ENCODE measurements at regions of chr1 and their contacts with region 1.

Region 1: DNA sequence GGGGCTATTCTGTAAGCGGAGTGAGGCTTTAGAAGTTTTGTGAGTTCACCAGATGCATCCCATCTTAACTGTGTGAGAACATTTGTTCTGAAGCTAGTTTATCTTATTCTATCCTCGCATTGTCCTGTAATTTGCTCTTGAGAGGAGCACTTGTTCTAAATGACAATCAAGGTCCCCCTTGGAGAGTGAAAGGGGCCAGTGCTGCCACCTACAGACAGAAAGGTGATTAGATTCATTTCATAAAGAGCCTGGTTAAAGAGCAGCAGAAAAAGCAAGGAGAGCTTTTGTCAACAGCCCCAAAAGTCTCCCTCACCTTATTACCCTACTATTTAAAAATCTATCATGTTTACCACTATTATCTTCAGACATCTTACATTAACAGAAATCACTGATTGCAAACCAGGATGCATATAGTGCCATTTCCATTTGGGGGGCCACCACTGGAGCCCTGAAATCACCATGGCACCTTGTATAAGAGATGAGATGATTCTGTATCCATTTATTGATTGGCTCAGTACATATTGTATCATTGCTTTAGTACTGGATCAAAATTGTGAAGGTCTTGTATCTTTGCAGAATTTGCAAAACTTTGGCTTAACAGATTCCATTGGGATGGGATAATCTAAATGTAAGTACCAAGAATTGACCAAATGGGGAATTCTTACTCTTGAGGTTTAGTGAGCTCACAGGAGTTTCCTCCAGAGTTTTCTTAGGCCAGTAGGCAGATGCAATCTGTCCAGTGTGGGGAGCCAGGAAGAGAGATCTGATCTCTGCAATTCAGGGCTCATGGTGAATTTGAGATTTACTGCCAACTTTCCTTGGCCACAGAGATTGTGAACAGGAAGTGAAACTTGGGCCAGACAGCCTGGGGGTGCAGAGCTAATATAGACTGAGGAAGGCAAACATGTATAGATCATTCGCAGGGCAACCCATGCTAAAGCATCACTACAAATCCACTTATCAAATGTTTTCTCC is 64.3 kb upstream of the TRABD2B start:
- DNase-seq: peak; percentile 77
- H3K4me3 ChIP-seq: no peak overlapping the region
- H3K27ac ChIP-seq: no peak overlapping the region
- H3K4me1 ChIP-seq: no peaks in the 10 kb centered on the region
- H3K27me3 ChIP-seq: no peaks in the 10 kb centered on the region
- CTCF ChIP-seq: peak; percentile 43

Region 2: DNA sequence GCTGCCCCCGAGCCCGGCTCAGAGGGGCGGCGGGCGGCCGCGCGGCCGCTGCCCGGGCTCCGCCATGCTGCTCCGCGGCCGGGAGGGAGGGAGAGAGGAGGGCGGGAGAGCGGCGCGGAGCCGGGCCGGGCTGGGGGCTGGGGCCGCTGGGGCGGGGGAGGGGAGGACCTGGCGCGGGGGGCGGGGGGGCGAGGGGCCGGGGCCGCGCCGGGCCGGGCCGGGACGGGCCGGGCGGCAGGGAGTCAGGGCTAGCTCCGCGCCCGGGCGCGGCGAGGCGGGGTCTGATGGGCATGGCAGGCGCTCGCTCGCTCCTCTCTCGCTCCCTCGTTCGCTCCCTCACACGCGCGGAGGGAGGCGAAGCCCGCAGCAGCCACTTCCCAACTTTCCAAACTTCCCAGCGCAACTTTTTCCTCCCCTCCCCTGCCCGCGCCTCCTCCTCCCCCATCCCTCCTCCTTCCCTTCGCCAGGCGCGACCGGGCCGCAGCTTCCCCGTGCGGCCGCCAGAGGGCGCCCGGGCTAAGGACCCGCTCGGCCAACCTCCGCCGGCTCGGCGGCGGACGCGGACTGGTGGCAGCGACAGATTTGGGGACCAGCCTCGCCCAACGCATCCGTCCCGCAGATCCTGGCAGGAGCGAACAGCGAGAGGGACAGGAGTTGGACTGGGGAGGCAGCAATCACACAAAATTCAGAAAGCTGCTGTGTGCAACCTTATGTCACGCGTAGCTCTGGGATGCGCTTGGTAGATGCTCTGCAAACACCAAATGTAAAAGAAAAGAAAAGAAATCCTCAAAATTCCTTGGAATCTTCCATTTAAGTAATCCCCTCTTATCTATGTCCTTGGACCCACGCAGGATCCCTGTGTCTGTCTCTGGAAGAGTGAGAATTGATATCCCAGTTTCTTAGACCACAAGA is 63.9 kb before region 1 on chr1 and contains the start of gene TRABD2B:
- intact Hi-C with region 1: loop called (anchors 5 kb)
- DNase-seq: peak; percentile 79
- H3K4me3 ChIP-seq: peak within 1 kb of the TSS; percentile 51
- H3K27ac ChIP-seq: no peak within 1 kb of the TSS
- H3K4me1 ChIP-seq: no peaks in the 10 kb centered on the region
- H3K27me3 ChIP-seq: peaks cover 9% of the 10 kb centered on the region
- CTCF ChIP-seq: peak; percentile 86
- total RNA-seq, gene TRABD2B: 0.42 to 0.77 TPM

Region 3: DNA sequence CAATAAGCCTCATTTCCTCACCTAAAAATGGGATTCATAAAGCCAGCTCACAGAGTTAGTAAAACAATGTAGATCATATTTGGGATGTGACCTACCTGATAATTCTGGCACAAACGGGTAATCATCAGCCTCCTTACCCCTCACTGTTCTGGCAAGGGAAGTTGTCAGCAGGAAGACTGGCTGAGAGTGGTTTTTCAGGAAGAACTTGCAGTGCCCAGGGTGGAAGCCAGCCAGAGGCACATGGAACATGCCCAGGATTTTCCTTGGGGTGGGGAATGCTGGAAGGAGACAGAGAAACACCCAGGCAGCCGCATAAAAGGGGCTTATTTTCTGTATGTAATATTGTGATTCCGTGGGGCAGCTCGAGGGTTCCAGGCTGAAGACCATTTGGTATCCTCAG is 153.4 kb after region 1 on chr1:
- intact Hi-C with region 1: no loop called
- DNase-seq: peak; percentile 29
- H3K4me3 ChIP-seq: no peak overlapping the region
- H3K27ac ChIP-seq: no peak overlapping the region
- H3K4me1 ChIP-seq: no peaks in the 10 kb centered on the region
- H3K27me3 ChIP-seq: no peaks in the 10 kb centered on the region
- CTCF ChIP-seq: no peak

Region 4: DNA sequence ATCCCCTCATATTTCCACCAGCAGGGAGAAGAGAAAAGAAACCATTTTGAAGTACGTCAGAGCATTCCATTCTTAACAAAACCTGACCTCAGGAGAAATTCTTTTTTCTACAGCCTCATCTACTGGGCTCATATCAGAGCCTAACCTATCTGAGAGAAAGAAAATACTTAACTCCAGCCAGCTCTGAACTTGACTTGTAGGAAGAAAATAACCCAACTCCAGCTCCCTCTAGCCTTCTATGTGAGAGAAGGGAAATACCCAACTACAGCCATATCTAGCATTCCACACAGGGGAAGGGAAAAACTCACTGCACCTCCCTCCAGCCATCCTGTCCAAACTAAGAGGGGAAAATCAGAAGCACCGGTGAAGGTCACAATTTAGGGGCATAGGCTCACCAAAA is 352.8 kb after region 1 on chr1:
- intact Hi-C with region 1: no loop called
- DNase-seq: no peak
- H3K4me3 ChIP-seq: no peak overlapping the region
- H3K27ac ChIP-seq: no peak overlapping the region
- H3K4me1 ChIP-seq: no peaks in the 10 kb centered on the region
- H3K27me3 ChIP-seq: no peaks in the 10 kb centered on the region
- CTCF ChIP-seq: no peak

Measured in colonic mucosa (tissue), 4 donors.